Mammary epithelial cell (primary cell): ENCODE measurements at regions of chr9 and their contacts with region 1.

Region 1: GRCh38 chr9:115524453-115525059 is 406.6 kb upstream of the TNC start:
- DNase-seq: peak; percentile 60
- H3K4me3 ChIP-seq: no peak overlapping the region
- H3K27ac ChIP-seq: no peak overlapping the region
- H3K4me1 ChIP-seq: no peaks in the 10 kb centered on the region
- H3K27me3 ChIP-seq: no peaks in the 10 kb centered on the region
- CTCF ChIP-seq: peak; percentile 69 to 80

Region 2: GRCh38 chr9:114754581-114754980 is 770.0 kb before region 1 on chr9:
- CTCF ChIA-PET with region 1: no interaction called
- dilution Hi-C with region 1: no loop called
- in situ Hi-C with region 1: loop called in 1 of 2 experiments (anchors 25 kb)
- intact Hi-C with region 1: no loop called
- DNase-seq: no peak
- H3K4me3 ChIP-seq: no peak overlapping the region
- H3K27ac ChIP-seq: no peak overlapping the region
- H3K4me1 ChIP-seq: no peaks in the 10 kb centered on the region
- H3K27me3 ChIP-seq: no peaks in the 10 kb centered on the region
- CTCF ChIP-seq: no peak

Region 3: DNA sequence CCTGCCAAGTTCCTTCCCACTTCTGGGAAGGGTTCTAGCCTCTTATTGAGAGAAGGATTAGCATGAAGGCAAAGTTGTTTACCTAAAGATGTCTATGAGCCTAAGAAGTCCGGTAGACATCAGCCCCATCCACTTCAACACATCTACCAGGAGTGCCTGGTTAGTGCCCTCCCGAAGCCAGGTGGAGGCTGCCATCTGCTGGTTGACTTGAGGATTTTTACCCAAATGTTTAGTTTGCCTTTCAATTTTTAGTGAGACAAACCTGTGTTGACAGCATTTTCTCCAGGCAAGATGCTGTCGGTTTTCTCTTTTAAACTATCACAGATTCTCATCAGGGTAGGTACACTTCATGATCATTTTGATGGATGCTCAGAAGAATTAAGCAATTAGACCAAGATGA is 510.6 kb before region 1 on chr9:
- CTCF ChIA-PET with region 1: no interaction called
- dilution Hi-C with region 1: no loop called
- in situ Hi-C with region 1: loop called (anchors 5 to 10 kb)
- intact Hi-C with region 1: loop called (anchors 1 kb)
- DNase-seq: peak; percentile 57
- H3K4me3 ChIP-seq: no peak overlapping the region
- H3K27ac ChIP-seq: no peak overlapping the region
- H3K4me1 ChIP-seq: peaks cover under 1% of the 10 kb centered on the region
- H3K27me3 ChIP-seq: no peaks in the 10 kb centered on the region
- CTCF ChIP-seq: peak; percentile 74 to 83

Region 4: DNA sequence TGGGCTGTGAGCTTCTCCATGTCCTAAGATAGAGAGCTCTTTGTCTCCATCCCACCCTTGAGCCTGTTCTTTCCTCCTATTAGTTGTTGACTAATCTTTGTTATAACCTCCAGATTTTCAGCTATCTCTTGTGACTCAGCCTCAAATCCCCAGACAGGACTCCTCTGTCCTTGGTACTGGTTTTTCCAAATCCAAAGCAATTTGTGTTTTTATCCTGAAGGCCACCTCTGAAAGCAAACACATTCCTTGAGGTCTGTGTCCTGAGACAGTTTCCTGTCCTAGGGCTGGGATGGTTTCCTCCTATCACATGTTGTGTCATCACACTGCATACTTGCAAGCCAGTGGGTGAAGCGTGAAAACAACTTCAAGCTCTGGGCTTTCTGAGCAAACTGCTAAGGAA is 415.1 kb before region 1 on chr9:
- CTCF ChIA-PET with region 1: no interaction called
- dilution Hi-C with region 1: no loop called
- in situ Hi-C with region 1: loop called in 1 of 2 experiments (anchors 10 kb)
- intact Hi-C with region 1: no loop called
- DNase-seq: peak; percentile 73
- H3K4me3 ChIP-seq: no peak overlapping the region
- H3K27ac ChIP-seq: no peak overlapping the region
- H3K4me1 ChIP-seq: peaks cover 43% of the 10 kb centered on the region
- H3K27me3 ChIP-seq: no peaks in the 10 kb centered on the region
- CTCF ChIP-seq: no peak

Region 5: GRCh38 chr9:115250621-115251032 is 273.9 kb before region 1 on chr9:
- CTCF ChIA-PET with region 1: no interaction called
- dilution Hi-C with region 1: no loop called
- in situ Hi-C with region 1: no loop called
- intact Hi-C with region 1: loop called (anchors 1 kb)
- DNase-seq: peak; percentile 98
- H3K4me3 ChIP-seq: no peak overlapping the region
- H3K27ac ChIP-seq: peak overlapping the region; percentile 92
- H3K4me1 ChIP-seq: peaks cover 21% of the 10 kb centered on the region
- H3K27me3 ChIP-seq: no peaks in the 10 kb centered on the region
- CTCF ChIP-seq: peak; percentile 1 to 16

Region 6: GRCh38 chr9:115391168-115391825 is 133.3 kb before region 1 on chr9:
- CTCF ChIA-PET with region 1: no interaction called
- dilution Hi-C with region 1: no loop called
- in situ Hi-C with region 1: no loop called
- intact Hi-C with region 1: no loop called
- DNase-seq: no peak
- H3K4me3 ChIP-seq: no peak overlapping the region
- H3K27ac ChIP-seq: no peak overlapping the region
- H3K4me1 ChIP-seq: peaks cover 26% of the 10 kb centered on the region
- H3K27me3 ChIP-seq: no peaks in the 10 kb centered on the region
- CTCF ChIP-seq: no peak